Dendritic cell treated with granulocyte-macrophage colony-stimulating factor and Interleukin-4, amounts not matched to agents 40 ng/mL and 50 ng/mL, for 4 days (primary cell): ENCODE measurements at regions of chr19 and their contacts with region 1.

Region 1: GRCh38 chr19:10870955-10871603 is at the start of gene CARM1:
- H3K4me3 Mint-ChIP-seq: peak within 1 kb of the TSS; percentile 80
- H3K27ac Mint-ChIP-seq: peak within 1 kb of the TSS; percentile 88
- H3K4me1 Mint-ChIP-seq: peaks cover 75% of the 10 kb centered on the region
- H3K27me3 Mint-ChIP-seq: no peaks in the 10 kb centered on the region

Region 2: GRCh38 chr19:10907925-10908324 is 36.8 kb after region 1 on chr19:
- intact Hi-C with region 1: loop called (anchors 5 kb)
- H3K4me3 Mint-ChIP-seq: peak overlapping the region; percentile 4
- H3K27ac Mint-ChIP-seq: peak overlapping the region; percentile 79
- H3K4me1 Mint-ChIP-seq: peaks cover 19% of the 10 kb centered on the region
- H3K27me3 Mint-ChIP-seq: no peaks in the 10 kb centered on the region

Region 3: DNA sequence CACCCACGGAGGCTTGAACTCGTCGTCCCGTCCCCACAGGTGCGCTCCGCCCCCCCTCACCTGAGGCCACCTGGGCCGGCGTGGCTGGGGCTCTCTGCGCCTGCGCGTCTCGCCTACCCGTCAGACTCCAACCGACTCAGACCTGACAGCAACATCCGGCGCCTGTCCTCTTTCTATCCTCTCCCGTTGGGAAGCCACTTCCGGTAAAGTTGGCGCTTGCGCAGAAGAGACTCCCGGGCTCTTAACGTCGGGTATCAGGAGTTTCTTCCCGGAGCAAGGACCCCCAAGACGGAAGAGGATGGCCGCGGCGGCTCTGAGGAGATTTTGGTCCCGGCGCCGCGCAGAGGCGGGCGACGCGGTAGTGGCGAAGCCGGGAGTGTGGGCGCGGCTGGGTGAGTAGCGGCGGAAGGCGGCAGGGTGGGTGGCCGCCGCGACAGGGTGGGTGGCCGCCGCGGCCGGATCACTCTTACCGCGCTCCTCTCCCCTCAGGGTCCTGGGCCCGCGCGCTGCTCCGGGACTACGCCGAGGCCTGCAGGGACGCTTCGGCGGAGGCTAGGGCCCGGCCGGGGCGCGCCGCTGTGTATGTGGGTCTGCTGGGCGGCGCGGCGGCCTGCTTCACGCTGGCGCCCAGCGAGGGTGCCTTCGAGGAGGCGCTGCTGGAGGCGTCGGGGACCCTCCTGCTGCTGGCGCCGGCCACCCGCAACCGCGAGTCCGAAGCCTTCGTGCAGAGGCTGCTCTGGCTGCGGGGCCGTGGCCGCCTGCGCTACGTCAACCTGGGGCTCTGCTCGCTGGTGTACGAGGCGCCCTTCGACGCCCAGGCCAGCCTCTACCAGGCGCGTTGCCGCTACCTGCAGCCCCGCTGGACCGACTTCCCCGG is 57.7 kb after region 1 on chr19 and contains the starts of genes TIMM29 and YIPF2:
- intact Hi-C with region 1: loop called (anchors 1 kb)
- H3K4me3 Mint-ChIP-seq: peak within 1 kb of the TSS; percentile 97
- H3K27ac Mint-ChIP-seq: peak within 1 kb of the TSS; percentile 87
- H3K4me1 Mint-ChIP-seq: peaks cover 19% of the 10 kb centered on the region
- H3K27me3 Mint-ChIP-seq: no peaks in the 10 kb centered on the region

Region 4: DNA sequence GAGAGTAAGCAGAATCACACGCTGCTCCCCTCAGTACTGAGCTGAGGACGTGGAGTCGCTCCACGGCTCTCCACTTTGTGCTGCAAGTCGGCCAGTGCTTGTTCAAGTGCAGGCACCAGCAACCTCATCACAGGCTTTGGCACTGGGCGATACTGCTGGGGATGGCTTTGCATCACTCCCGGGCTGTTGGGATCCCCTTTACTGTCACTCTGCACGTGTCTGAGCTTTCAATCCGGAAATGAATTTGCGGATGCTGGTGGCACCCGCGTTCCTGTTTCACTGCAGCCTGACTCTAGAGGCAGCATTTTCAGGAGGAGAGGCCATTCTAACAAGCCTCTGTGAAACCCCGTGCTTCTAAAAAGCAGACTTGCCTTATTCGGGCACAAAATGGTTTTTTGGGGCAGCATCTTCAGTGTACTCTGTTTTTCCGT is 108.9 kb after region 1 on chr19:
- intact Hi-C with region 1: no loop called
- H3K4me3 Mint-ChIP-seq: no peak overlapping the region
- H3K27ac Mint-ChIP-seq: no peak overlapping the region
- H3K4me1 Mint-ChIP-seq: peaks cover 33% of the 10 kb centered on the region
- H3K27me3 Mint-ChIP-seq: no peaks in the 10 kb centered on the region